ENCODE measurements at regions of chr15 and their contacts with region 1.

Region 1: GRCh38 chr15:52179278-52180195 is 11.7 kb downstream of the GNB5 start:
- DNase-seq: peak; percentile 87
- H3K4me3 Mint-ChIP-seq: peak overlapping the region; percentile 90
- H3K27ac Mint-ChIP-seq: peak overlapping the region; percentile 94
- H3K4me1 Mint-ChIP-seq: peaks cover 37% of the 10 kb centered on the region
- H3K27me3 Mint-ChIP-seq: no peaks in the 10 kb centered on the region

Region 2: GRCh38 chr15:52208306-52208946 is 28.9 kb after region 1 on chr15:
- intact Hi-C with region 1: loop called (anchors 1 kb)
- DNase-seq: peak; percentile 65
- H3K4me3 Mint-ChIP-seq: no peak overlapping the region
- H3K27ac Mint-ChIP-seq: no peak overlapping the region
- H3K4me1 Mint-ChIP-seq: no peaks in the 10 kb centered on the region
- H3K27me3 Mint-ChIP-seq: peaks cover 4% of the 10 kb centered on the region